Heart right ventricle (tissue), 16 donors: ENCODE measurements at regions of chr7 and their contacts with region 1.

Region 1: GRCh38 chr7:155283565-155284194 is 14.0 kb upstream of the INSIG1 start:
- DNase-seq: no peak
- ATAC-seq: no peak
- H3K4me3 ChIP-seq: no peak overlapping the region
- H3K27ac ChIP-seq: no peak overlapping the region
- H3K4me1 ChIP-seq: peaks cover 0 to 49% (median 0%) of the 10 kb centered on the region in 9 donors
- H3K27me3 ChIP-seq: peaks cover 0 to 37% (median 22%) of the 10 kb centered on the region in 7 donors
- CTCF ChIP-seq: no peak

Region 2: GRCh38 chr7:155227981-155228811 is 55.5 kb before region 1 on chr7:
- intact Hi-C with region 1: loop called in 1 of 10 experiments (anchors 5 kb)
- DNase-seq: no peak
- ATAC-seq: peak in 1 of 8 donors; percentile 39
- H3K4me3 ChIP-seq: no peak overlapping the region
- H3K27ac ChIP-seq: no peak overlapping the region
- H3K4me1 ChIP-seq: no peaks in the 10 kb centered on the region
- H3K27me3 ChIP-seq: peaks cover 0 to 28% (median 16%) of the 10 kb centered on the region in 7 donors
- CTCF ChIP-seq: no peak

Region 3: GRCh38 chr7:155270861-155271260 is 12.8 kb before region 1 on chr7:
- intact Hi-C with region 1: loop called in 1 of 10 experiments (anchors 1 kb)
- DNase-seq: no peak
- ATAC-seq: no peak
- H3K4me3 ChIP-seq: no peak overlapping the region
- H3K27ac ChIP-seq: no peak overlapping the region
- H3K4me1 ChIP-seq: no peaks in the 10 kb centered on the region
- H3K27me3 ChIP-seq: peaks cover 0 to 22% (median 4%) of the 10 kb centered on the region in 7 donors
- CTCF ChIP-seq: no peak